ENCODE measurements at regions of chr20 and their contacts with region 1.

Region 1: GRCh38 chr20:40233406-40233805 is 455.6 kb downstream of the MAFB start:
- H3K4me3 Mint-ChIP-seq: no peak overlapping the region
- H3K27ac Mint-ChIP-seq: no peak overlapping the region
- H3K4me1 Mint-ChIP-seq: peaks cover 21% of the 10 kb centered on the region
- H3K27me3 Mint-ChIP-seq: peaks cover 54% of the 10 kb centered on the region

Region 2: DNA sequence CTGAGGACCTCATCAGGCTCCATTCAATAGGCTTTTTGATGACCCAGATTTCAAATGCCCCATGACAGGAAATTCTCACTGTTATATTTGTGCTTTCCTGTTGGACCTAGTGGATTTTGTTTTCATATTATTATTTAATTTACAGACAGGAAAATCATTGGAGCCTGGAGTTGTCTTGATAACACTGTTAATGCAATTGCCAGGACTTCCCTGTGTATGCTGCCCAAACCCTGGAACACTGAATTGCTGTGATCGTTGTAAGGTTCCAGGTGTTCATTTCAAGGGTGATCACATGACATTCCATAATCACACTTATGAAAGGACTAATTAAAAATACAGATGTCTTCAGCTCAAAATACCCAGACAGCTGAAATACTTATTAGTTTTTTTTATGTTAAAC is 488.0 kb before region 1 on chr20:
- intact Hi-C with region 1: no loop called
- H3K4me3 Mint-ChIP-seq: no peak overlapping the region
- H3K27ac Mint-ChIP-seq: no peak overlapping the region
- H3K4me1 Mint-ChIP-seq: no peaks in the 10 kb centered on the region
- H3K27me3 Mint-ChIP-seq: no peaks in the 10 kb centered on the region

Region 3: DNA sequence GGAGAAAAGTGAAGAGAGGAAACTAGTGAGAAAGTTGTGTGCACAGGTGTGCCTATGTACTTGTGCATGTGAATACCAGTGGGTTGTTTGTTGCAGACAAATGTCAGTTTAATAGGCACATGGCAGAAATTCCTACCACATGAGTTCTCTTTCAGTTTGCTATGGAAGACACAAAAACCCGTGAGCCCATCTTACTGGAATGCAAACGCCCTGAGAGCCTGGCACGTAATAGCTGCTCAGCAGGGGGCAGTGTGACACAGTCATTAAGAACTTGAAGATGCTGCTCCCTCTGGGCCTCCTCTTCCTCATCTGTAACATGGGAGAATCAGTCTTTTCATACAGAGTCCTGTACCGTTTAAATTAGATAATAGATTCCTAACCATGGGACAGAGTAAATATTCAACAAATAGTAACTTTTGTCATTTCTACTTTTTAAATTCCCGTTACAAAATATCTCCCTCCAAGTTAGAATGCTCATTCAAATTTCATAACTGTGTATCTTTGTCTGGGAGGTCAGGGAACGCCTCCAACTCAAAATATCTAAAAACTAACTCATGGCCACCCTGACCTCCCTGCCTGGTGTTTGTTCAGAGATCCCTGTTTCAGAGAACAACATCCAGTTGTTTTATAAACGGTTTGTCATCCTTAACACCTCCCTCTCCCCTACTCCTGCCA is 347.3 kb before region 1 on chr20:
- intact Hi-C with region 1: loop called (anchors 10 kb)
- H3K4me3 Mint-ChIP-seq: peak overlapping the region; percentile 44
- H3K27ac Mint-ChIP-seq: peak overlapping the region; percentile 81
- H3K4me1 Mint-ChIP-seq: peaks cover 27% of the 10 kb centered on the region
- H3K27me3 Mint-ChIP-seq: peaks cover 9% of the 10 kb centered on the region

Region 4: DNA sequence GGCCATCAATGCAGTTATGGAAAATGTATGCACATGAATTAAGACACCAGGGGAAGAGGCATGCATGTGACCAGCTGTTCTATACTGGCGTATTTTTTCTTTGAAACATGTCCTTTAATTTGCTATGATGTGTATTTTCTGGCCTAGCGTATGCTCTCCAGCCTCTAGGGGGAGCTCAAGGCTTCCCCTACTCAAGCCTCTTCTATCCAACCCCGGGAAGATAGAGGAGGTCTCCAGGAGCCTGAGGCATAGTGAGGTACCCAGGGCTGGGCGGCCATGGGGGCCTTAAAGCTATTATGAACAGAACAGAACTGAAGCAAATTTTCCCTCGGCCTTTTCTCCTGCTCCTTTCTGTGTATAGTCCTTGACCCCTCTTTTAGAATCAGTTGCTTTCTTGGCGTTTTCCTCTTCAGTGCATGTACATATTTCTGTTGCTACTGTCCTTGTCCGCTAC is 73.3 kb before region 1 on chr20:
- intact Hi-C with region 1: no loop called
- H3K4me3 Mint-ChIP-seq: no peak overlapping the region
- H3K27ac Mint-ChIP-seq: no peak overlapping the region
- H3K4me1 Mint-ChIP-seq: peaks cover 32% of the 10 kb centered on the region
- H3K27me3 Mint-ChIP-seq: peaks cover 14% of the 10 kb centered on the region

Region 5: GRCh38 chr20:40293740-40294139 is 60.3 kb after region 1 on chr20:
- intact Hi-C with region 1: no loop called
- H3K4me3 Mint-ChIP-seq: no peak overlapping the region
- H3K27ac Mint-ChIP-seq: peak overlapping the region; percentile 59
- H3K4me1 Mint-ChIP-seq: peaks cover 27% of the 10 kb centered on the region
- H3K27me3 Mint-ChIP-seq: peaks cover 8% of the 10 kb centered on the region